Astrocyte of the cerebellum (primary cell): ENCODE measurements at regions of chr2 and their contacts with region 1.

Region 1: DNA sequence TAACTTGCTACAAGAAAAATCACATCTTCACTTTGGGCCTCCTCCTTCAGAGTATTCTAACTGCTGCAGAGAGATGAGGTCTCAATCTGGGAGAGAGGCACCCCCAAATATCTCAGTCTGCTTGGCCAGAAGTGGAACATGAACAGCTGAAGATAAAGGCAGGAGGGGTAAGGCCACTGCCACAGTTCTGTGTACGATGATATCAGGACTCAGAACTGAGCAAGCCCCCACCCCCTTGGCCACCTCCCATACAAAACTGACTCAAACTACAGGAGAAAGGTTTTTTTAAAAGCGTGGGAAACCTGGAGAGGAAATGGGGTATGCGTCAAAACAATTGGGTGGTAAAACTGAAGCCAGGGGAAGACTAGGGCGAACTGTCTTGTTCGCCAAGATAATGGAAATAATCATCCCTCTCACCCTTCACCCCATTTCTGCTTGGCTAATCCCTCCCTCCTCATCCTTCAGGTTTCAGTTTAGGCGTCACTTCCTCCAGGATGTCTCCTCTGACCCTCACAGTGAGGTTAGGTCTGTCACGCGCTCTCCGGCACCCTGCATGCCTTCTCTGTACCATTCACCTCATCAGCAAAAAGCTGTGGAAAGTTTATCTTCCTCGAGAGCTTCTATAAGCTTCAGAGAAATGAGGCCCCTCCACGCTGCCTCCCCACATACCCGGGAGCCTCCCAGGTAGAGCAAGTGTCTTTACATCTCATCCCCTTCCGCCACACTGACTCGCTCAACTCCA is 64.4 kb downstream of the SFXN5 start:
- DNase-seq: no peak
- H3K4me3 ChIP-seq: no peak overlapping the region
- CTCF ChIP-seq: no peak

Region 2: GRCh38 chr2:72533765-72534164 is 473.4 kb before region 1 on chr2:
- in situ Hi-C with region 1: no loop called
- DNase-seq: no peak
- H3K4me3 ChIP-seq: no peak overlapping the region
- CTCF ChIP-seq: no peak

Region 3: DNA sequence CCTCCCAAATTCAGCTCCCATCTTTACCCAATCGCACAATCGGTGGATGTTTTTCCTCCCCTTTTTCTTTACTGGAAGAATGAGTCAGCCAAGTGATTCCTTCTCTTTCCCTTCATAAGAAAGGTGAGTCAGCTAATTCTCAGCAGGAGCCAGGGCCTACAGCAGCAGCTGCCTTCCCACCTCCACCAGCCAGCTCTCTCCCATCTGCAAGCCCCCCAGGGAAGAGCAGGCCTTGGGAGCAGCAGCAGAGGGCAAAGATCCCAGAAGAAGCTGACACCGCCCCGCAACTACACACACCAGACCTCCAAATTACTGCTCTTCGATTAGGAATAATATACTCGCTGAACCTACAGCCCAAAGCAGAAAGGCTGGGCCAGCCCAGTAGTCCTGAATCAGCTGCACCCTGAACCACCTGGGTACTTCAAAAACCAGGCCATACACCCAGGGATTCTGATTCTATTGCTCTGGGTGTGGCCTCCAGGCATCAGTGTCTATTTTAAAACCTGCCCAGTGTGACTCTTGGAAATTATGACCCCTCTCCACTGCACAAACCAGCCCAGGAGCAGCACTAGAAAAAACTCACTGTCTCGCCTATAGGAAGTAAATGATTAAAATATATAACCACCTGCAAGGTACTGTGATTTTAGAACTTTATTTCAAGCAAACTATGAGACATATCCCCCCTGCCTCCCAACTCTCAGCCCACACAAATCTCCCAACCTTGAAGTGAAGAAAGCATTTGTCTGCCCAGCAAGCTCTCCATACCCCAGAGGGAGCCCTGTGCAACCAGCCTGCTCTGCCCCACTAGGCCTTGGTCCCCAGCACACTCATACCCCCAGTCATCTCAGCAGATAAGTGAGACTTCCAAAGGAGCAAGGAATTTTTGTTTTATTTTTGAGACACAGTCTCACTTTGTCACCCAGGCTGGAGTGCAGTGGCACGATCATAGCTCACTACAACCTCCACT is 57.1 kb after region 1 on chr2:
- in situ Hi-C with region 1: loop called (anchors 5 kb)
- DNase-seq: peak; percentile 72
- H3K4me3 ChIP-seq: no peak overlapping the region
- CTCF ChIP-seq: no peak